Heart right ventricle (tissue), 16 donors: ENCODE measurements at regions of chr9 and their contacts with region 1.

Region 1: GRCh38 chr9:127360829-127361228 is 36.1 kb upstream of the SLC2A8 start:
- DNase-seq: no peak
- ATAC-seq: peak in 2 of 8 donors; percentile 22 to 44
- H3K4me3 ChIP-seq: no peak overlapping the region
- H3K27ac ChIP-seq: no peak overlapping the region
- H3K4me1 ChIP-seq: peaks cover 0 to 16% (median 0%) of the 10 kb centered on the region in 9 donors
- H3K27me3 ChIP-seq: no peaks in the 10 kb centered on the region
- CTCF ChIP-seq: peak in 3 of 9 donors; percentile 3 to 8 (median 6)

Region 2: GRCh38 chr9:127214421-127215267 is 146.2 kb before region 1 on chr9:
- intact Hi-C with region 1: loop called in 2 of 10 experiments (anchors 10 kb)
- DNase-seq: peak in 1 of 2 donors; percentile 52
- ATAC-seq: peak in 6 of 8 donors; percentile 9 to 61 (median 46)
- H3K4me3 ChIP-seq: no peak overlapping the region
- H3K27ac ChIP-seq: no peak overlapping the region
- H3K4me1 ChIP-seq: peaks cover 0 to 11% (median 0%) of the 10 kb centered on the region in 9 donors
- H3K27me3 ChIP-seq: no peaks in the 10 kb centered on the region
- CTCF ChIP-seq: peak; percentile 56 to 80 (median 76)

Region 3: DNA sequence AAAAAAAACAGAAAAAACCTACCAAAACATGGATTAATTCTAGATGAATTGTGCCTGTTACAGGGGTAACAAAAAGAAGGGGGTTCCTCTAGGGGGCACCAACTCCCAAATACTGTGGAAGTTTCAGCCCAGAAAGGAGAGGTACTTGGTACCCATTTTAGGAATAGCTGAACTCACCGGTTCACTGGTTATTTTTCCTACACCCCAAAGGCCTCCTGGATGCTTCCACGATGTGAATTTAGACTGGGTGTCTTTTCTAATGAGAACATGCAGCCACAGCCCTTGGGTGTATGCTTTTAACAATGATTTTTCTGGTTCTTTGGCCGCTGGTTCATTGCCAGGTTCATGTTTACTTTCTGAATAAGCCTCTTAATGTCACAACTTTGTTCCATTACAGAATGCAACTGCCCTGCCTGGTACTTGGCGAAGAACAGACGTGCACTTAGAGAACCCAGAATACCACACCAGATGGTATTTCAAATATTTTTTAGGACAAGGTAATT is 49.5 kb before region 1 on chr9:
- intact Hi-C with region 1: loop called in 1 of 10 experiments (anchors 1 kb)
- DNase-seq: peak in 1 of 2 donors; percentile 58
- ATAC-seq: peak in 6 of 8 donors; percentile 8 to 64 (median 57)
- H3K4me3 ChIP-seq: no peak overlapping the region
- H3K27ac ChIP-seq: peak overlapping the region; percentile 8 to 83 (median 58)
- H3K4me1 ChIP-seq: peaks cover 0 to 64% (median 36%) of the 10 kb centered on the region in 9 donors
- H3K27me3 ChIP-seq: no peaks in the 10 kb centered on the region
- CTCF ChIP-seq: peak; percentile 45 to 71 (median 61)

Region 4: GRCh38 chr9:127347831-127348779 is 12.7 kb before region 1 on chr9:
- intact Hi-C with region 1: no loop called
- DNase-seq: peak in 1 of 2 donors; percentile 24
- ATAC-seq: peak in 5 of 8 donors; percentile 49 to 78 (median 76)
- H3K4me3 ChIP-seq: no peak overlapping the region
- H3K27ac ChIP-seq: peak overlapping the region in 2 of 10 donors; percentile 38 to 51
- H3K4me1 ChIP-seq: peaks cover 0 to 68% (median 12%) of the 10 kb centered on the region in 9 donors
- H3K27me3 ChIP-seq: no peaks in the 10 kb centered on the region
- CTCF ChIP-seq: peak in 8 of 9 donors; percentile 43 to 78 (median 56)

Region 5: DNA sequence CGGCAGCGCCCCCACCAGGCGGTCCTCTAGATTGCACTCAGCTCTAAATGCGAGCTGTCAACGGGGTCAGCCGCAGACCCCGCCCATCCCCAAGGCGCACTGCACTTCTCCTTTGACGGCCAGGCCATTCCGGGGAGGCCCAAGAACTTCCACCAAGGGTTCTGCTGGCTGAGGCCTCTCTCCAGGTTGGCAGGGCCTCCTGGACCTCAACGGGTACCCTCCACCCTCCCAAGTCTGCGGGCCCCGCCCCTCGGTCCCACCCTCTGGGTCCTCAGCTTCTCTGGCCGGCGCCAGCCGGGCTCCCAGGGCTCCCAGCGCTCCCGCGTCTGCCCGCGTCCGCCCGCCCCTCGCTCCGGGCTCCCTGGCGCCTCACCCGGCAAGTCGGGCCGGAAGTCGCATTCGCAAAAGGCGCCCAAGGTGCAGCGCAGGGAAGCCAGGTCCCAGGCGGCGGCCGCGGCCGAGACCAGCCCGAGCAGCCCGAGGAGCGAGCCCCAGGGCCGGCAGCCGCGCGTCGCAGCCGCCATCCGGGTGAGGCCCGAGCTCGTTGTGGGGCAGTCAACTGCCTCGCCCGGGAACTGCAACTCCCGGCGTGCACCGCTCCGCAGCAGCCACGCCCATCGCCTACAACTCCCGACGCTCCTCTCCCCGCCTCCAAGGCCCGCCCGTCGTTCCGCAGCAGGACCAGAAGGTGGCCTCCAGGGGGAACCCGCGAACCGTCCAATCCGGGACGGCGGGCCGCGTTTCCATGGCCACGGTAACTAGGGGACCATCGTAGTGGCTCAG is 374.1 kb after region 1 on chr9 and contains the start of gene TOR2A:
- intact Hi-C with region 1: no loop called
- DNase-seq: peak; percentile 98 to 99
- ATAC-seq: peak; percentile 94 to 97 (median 95)
- H3K4me3 ChIP-seq: peak within 1 kb of the TSS; percentile 46 to 95 (median 78)
- H3K27ac ChIP-seq: peak within 1 kb of the TSS; percentile 90 to 99 (median 97)
- H3K4me1 ChIP-seq: peaks cover 10 to 35% (median 19%) of the 10 kb centered on the region in 9 donors
- H3K27me3 ChIP-seq: no peaks in the 10 kb centered on the region
- CTCF ChIP-seq: peak; percentile 90 to 99 (median 95)
- total RNA-seq, gene TOR2A: 1.5 to 6.3 (median 2.2) TPM